Mammary epithelial cell (primary cell): ENCODE measurements at regions of chr13 and their contacts with region 1.

Region 1: GRCh38 chr13:99758460-99759162 is 213.0 kb downstream of the ZIC5 start:
- DNase-seq: no peak
- H3K4me3 ChIP-seq: no peak overlapping the region
- H3K27ac ChIP-seq: no peak overlapping the region
- H3K4me1 ChIP-seq: no peaks in the 10 kb centered on the region
- H3K27me3 ChIP-seq: no peaks in the 10 kb centered on the region
- CTCF ChIP-seq: no peak

Region 2: DNA sequence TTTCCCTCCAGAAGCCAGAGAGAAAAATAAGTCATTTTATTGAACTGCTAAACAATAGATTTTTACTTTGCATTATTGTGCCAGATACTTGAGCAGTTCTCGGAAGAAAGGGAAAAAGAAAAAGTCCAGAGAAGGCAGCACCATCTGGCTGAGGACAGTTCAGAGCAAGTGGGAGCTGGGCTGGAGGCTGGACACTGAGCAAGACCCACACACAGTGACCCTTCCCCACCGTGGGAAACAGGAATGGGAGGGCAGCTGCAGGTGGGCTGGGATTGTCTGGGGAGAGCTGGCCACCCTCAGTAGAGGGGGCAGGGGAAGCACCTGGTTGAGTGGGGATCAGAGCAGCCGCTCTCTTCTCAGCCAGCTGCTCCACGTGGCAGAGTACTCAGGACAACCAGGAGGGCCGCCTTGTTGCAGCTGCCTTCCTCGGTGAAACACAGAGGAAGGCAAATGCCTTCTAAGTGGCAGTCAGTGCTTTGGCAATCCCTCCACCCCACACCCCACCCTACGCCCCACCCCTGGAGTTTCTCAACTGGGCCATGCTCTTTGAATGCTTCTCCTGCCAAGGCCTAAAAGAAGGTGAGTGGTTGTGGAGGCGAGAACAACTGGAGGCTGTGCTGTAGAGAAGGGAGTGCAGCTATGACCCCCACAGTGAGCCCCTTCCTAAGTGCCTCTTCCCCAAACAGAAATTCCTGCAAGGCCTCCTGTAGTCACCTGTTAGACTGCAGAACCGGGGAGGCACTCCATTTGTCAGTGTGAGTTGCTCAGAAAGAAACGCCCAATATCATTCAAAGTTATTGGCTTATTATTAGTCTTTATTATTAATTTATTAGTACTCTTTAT is 33.7 kb after region 1 on chr13:
- CTCF ChIA-PET with region 1: no interaction called
- dilution Hi-C with region 1: loop called (anchors 5 kb)
- in situ Hi-C with region 1: no loop called
- intact Hi-C with region 1: no loop called
- DNase-seq: no peak
- H3K4me3 ChIP-seq: no peak overlapping the region
- H3K27ac ChIP-seq: no peak overlapping the region
- H3K4me1 ChIP-seq: no peaks in the 10 kb centered on the region
- H3K27me3 ChIP-seq: no peaks in the 10 kb centered on the region
- CTCF ChIP-seq: no peak

Region 3: DNA sequence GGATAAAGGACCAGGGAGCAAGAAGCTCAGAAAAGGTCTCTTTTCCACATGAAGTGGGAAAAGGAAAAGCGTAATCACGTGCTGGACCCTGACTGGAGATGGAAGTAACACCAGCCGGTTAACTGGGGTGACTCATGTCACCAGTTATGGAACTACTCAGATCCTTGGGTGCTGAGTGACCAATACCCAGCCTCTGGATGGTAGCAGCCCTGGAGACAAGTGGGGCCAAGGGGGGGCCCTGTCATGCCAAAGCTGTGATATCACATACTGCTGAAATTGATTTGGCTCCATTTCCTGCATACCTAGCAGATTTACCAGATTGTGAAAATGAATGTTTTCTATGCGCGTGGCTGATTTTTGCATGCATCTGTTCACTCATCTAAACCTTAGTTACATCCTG is 54.0 kb after region 1 on chr13:
- CTCF ChIA-PET with region 1: no interaction called
- dilution Hi-C with region 1: loop called (anchors 10 kb)
- in situ Hi-C with region 1: no loop called
- intact Hi-C with region 1: no loop called
- DNase-seq: no peak
- H3K4me3 ChIP-seq: no peak overlapping the region
- H3K27ac ChIP-seq: no peak overlapping the region
- H3K4me1 ChIP-seq: no peaks in the 10 kb centered on the region
- H3K27me3 ChIP-seq: peaks cover 1% of the 10 kb centered on the region
- CTCF ChIP-seq: no peak